ENCODE measurements at regions of chr19 and their contacts with region 1.

Region 1: DNA sequence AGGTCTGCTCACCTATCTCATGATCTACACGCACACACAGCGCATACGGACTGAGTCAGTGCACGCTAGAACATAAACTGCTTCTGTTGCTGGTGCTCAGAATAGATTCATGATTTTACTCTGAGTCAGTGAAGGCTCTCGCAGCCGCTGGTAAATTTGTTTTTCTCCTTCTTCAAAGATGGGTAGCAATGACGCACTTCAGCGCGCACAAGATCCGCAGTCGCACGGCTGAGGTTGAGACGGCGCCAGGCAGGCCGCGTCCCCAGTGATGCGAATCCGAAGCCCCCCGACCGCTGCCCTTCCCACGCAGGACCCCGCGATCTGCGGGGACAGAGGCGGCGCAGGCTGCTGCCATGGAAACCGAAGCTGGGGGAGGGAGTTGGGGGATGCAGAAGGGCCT is 103.7 kb upstream of the USP29 start:
- DNase-seq: no peak
- H3K4me3 ChIP-seq: no peak overlapping the region
- H3K27ac ChIP-seq: no peak overlapping the region
- H3K4me1 ChIP-seq: no peaks in the 10 kb centered on the region
- H3K27me3 ChIP-seq: peaks cover 0 to 4% (median 0%) of the 10 kb centered on the region in 7 donors
- CTCF ChIP-seq: no peak
- POLR2A ChIP-seq: no peak

Region 2: GRCh38 chr19:57037556-57037955 is 21.5 kb after region 1 on chr19:
- intact Hi-C with region 1: loop called (anchors 2 kb)
- DNase-seq: no peak
- H3K4me3 ChIP-seq: no peak overlapping the region
- H3K27ac ChIP-seq: no peak overlapping the region
- H3K4me1 ChIP-seq: no peaks in the 10 kb centered on the region
- H3K27me3 ChIP-seq: no peaks in the 10 kb centered on the region
- CTCF ChIP-seq: no peak
- POLR2A ChIP-seq: no peak